ENCODE measurements at regions of chr17 and their contacts with region 1.

Region 1: DNA sequence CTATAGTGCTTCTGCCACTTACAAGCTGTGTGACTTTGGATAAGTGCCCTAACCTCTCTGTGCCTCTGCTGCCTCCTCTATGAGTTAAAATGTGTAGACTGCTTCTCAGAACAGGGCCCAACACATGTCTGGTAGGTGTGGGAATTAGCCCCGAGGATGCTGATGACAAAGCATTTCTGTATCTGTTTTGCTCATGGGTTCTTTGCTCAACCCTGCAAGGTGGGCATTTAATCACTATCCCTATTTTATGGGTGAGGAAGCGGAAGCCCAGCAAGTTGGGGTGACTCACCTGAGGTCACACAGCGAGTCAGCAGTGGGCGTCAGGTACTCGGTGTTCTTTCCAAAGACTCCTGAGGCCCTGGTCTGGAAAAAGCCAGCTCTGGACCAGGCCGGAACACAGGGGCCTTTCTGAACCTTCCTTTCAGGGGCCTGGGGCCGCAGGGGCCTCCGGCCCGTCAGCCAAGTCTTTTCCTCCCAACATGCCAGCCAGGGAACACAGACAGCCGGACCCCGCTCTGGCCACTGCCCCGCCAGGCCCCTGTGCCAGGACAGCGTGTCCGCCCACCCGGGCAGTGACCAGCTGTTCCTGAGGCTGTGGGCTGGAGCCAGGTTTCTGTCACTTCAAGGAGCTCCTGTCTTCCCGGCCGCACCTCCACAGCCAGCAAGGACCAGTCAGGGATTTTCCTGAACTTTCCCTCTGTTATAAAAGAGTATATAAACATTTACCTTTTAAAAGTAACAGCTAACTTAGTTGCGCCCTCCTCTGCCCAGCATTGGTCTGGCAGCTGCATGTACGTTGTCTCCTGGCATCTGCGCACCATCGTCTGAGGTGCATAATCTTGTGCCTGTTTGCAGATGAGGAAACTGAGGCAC is 62.5 kb downstream of the SREBF1 start:
- DNase-seq: peak; percentile 84 to 85
- ATAC-seq: peak; percentile 94

Region 2: DNA sequence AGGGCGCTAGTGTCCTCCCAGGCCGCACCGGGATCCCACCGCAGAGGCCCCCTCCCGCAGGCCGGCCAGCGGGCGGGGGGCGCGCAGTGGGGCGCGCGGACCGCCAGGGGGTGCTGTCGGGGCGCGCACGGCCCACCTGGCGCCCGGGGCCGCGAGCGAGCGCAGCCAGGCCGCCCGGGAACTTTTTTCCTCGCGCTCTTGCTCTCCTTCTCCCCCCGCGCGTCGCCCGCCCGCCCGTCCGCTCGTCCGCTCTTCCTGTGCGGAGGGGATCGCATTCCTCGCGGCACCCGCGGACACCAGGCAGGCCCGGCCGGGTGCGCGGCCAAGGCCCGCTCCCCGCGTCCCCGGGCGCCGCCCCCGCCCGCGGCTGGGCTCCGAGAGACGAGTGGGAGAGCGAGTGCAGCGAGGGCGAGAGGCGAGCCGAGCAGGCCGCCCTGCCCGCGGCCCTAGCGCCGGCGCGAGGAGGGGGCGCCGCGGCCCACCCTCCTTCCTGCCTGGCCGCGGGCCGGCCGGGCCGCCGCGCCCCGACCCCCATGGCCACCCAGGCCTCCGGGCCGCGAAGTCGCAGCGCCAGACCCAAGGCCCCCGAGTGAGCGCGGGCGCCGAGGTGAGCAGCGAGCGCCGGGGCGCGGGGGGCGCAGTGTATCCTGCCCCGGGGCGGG is 92.9 kb before region 1 on chr17 and contains the start of gene RAI1:
- intact Hi-C with region 1: loop called in 1 of 2 experiments (anchors 10 kb)
- DNase-seq: peak; percentile 78 to 81
- ATAC-seq: peak; percentile 59
- total RNA-seq, gene RAI1: 15.8 to 23.8 TPM